CD8-positive, alpha-beta memory T cell (primary cell): ENCODE measurements at regions of chr20 and their contacts with region 1.

Region 1: GRCh38 chr20:815914-816606 is 17.5 kb upstream of the FAM110A start:
- DNase-seq: peak; percentile 51 to 75 (median 56)
- H3K4me3 ChIP-seq: no peak overlapping the region
- H3K4me3 Mint-ChIP-seq: no peak overlapping the region
- H3K27ac ChIP-seq: no peak overlapping the region
- H3K27ac Mint-ChIP-seq: peak overlapping the region in 1 of 8 donors; percentile 42
- H3K4me1 ChIP-seq: no peaks in the 10 kb centered on the region
- H3K4me1 Mint-ChIP-seq: peaks cover 0 to 6% (median 0%) of the 10 kb centered on the region in 3 donors
- H3K27me3 ChIP-seq: peaks cover 5% of the 10 kb centered on the region
- H3K27me3 Mint-ChIP-seq: peaks cover 9 to 34% of the 10 kb centered on the region in 2 donors

Region 2: DNA sequence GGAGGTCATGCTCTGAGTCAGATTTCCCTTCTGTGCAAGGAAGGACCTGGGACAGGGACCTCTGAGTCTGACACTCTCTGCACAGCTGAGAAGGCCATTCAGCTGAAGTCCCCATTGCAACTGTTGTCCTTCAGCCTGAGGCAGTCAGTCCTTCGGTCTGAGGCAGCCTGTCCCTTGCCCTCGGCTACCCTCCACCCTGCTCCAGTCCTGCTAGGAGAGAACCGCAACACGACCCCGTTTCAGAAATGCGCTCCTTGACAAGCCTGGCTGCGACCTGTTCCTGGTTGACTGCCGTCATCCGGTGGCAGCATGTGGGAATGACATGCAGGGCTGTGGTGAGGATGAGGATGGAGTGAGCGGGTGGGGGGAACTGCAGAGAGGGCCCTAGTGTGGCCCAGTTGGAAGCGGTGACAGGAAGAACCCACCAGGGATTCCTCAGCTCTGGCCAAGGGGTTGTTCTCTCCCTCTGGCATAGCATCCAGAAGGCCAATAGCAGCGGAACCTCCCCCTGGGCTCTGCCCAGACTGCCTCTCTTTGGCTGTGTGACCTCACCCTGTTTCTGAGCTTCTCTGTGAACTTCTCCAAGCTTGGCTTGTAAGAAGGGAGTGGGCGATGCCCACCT is 140.4 kb after region 1 on chr20:
- CTCF ChIA-PET with region 1: interaction called, 186 read pairs
- POLR2A ChIA-PET with region 1: no interaction called
- DNase-seq: peak; percentile 53 to 79 (median 64)
- H3K4me3 ChIP-seq: no peak overlapping the region
- H3K4me3 Mint-ChIP-seq: no peak overlapping the region
- H3K27ac ChIP-seq: no peak overlapping the region
- H3K27ac Mint-ChIP-seq: no peak overlapping the region
- H3K4me1 ChIP-seq: no peaks in the 10 kb centered on the region
- H3K4me1 Mint-ChIP-seq: peaks cover 0 to 4% (median 3%) of the 10 kb centered on the region in 3 donors
- H3K27me3 ChIP-seq: peaks cover 7% of the 10 kb centered on the region
- H3K27me3 Mint-ChIP-seq: peaks cover 28 to 71% of the 10 kb centered on the region in 2 donors